ENCODE measurements at regions of chr4 and their contacts with region 1.

Region 1: DNA sequence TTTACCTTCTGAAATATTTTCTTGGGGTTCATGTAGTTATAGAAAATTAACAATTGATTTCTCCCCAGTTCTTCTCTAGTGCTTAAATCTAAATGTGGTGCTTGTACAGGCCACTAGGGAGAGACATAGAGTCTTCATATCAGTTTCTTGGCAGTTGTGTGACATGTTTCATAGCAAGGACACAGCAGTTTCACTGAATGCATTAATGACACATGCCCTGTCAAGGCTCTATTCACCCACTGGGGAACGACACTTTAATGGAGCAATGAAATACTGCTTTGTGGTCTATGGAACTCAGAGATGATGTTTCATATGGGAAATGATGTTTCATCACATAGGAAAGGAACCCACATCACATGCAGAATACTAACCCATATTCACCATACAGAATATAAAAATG is 2.8 kb downstream of the VEGFC start:
- DNase-seq: no peak
- ATAC-seq: peak; percentile 38

Region 2: DNA sequence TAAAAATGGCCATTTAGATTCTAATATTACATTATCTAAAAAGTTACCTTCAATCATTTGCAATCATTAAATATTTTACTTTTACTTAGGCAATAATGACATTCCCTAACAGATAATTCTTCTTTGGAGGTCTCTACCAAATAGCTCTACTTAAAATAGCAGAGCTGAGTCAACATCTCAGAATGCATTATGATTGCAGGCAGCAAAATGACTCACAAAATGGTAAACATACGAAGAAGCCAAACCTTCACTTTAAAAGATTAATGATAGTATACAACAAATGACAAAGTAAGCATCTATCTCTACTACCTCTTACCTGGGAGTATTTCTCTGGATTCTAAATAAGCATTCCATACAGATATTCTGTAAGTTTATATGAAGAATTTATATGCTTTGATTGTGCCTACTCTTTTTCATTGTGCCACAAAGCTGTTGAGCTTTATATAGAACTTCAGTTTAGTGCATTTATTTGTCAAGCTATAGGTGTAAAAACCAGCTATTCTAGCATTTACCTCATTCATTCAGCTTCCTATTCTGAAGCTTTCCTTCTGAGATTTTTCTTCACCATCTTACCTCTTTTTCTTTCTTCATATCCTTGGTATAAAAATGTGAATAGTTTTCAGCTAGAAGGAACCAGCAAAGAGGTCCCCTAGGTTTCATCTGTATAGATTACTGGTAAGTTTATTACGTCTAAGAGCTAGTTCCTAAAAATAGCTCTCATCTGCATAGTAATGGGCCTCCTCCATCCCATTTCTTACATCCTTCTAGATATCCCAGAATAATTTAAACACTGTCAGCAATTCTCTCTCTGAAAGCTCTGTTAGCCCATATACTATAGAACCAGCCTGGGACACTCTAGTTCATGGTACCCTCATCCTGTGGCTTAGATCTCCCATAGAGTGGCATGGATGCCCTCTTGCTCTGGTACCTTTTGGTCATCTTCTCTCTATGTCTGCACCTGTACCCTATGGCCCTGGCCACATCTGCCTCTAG is 487.4 kb before region 1 on chr4:
- intact Hi-C with region 1: no loop called
- DNase-seq: no peak
- ATAC-seq: no peak

Region 3: DNA sequence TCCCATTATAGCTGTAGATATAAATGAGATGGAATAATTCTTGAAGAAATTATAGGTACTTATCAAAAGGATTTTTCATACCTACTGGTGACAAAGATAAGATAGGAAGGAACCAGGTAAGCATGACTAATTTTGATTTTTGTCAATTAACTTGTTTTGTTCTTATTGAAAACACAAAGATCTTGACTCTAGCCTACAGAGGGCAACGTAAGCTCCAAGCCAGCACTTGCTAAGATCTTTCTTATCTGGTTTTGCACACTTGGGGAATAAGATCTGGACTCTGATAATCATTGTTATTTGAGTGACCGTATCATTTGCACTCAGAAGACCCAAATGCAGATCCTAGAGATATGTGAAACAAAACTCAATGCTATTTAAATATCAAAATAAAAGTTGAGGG is 220.7 kb before region 1 on chr4:
- intact Hi-C with region 1: loop called (anchors 5 kb)
- DNase-seq: no peak
- ATAC-seq: no peak

Region 4: DNA sequence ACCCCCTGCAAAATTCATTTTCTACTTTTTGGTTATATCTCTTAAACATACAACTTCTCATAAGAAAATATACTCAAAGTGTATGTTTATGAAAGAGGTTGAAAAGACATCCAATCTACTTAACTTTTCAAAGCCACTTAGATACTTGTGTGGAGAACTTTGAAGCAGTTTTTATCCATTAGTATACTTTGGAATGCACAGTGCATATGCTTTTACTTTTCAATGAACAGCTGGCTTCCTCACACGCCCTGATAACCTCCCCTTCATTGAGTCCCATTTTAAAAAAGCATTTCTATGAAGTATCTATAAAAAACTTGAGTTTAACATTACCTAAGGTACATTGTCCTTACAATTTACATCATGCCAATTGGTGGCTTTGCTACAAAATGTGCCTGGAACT is 71.1 kb before region 1 on chr4:
- intact Hi-C with region 1: loop called (anchors 10 kb)
- DNase-seq: no peak
- ATAC-seq: no peak